H1 (cell line): ENCODE measurements at regions of chr20 and their contacts with region 1.

Region 1: DNA sequence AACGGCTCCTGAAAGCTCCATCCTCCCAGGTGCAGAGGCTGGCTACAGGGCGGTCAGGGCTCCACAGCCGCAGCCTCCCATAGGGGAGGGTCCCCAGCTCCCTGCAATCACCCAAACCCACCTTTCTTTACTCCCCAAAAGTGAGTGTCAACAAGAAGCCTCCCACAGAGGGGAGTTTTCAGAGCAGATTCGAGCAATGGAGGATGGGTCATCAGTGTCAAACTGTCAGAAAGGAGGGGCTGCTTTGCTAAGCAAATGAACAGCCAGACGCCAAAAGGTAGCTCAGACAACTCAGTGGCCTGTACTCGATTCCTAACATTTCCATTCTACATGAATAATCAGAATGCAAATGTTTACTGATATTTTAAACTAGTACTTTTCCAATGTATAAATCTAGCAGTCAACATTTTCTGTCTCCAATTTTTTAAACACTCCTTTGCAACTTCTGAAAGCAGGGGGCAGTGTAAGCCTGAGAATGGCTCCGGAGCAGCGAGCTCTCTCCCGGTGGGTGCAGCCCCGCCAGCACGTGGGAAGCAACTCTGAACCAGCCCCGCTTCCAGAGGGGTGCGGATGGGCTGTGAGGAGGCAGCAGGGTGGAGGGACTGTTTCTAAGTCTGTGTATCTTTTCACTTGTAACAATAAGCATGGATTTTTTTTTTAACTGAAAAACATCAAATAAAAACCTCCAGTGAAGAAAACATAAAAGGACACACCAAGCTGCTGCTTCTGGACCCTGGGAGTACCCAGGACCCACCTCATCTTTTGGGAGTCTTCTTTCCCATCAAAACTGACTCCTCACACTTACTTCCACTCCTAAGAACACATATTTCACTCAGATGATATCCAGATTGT is 54.9 kb downstream of the TAF4 start:
- DNase-seq: peak; percentile 23 to 70
- H3K4me3 ChIP-seq: no peak overlapping the region
- H3K27ac ChIP-seq: no peak overlapping the region
- H3K4me1 ChIP-seq: peaks cover 0 to 2% (median 0%) of the 10 kb centered on the region in 4 experiments; a peak in 3 of 7 replicates
- H3K27me3 ChIP-seq: no peaks in the 10 kb centered on the region
- CTCF ChIP-seq: peak; percentile 43 to 77 (median 62)
- EP300 ChIP-seq: no peak
- POLR2A ChIP-seq: no peak
- RAD21 ChIP-seq: peak; percentile 92 to 93

Region 2: DNA sequence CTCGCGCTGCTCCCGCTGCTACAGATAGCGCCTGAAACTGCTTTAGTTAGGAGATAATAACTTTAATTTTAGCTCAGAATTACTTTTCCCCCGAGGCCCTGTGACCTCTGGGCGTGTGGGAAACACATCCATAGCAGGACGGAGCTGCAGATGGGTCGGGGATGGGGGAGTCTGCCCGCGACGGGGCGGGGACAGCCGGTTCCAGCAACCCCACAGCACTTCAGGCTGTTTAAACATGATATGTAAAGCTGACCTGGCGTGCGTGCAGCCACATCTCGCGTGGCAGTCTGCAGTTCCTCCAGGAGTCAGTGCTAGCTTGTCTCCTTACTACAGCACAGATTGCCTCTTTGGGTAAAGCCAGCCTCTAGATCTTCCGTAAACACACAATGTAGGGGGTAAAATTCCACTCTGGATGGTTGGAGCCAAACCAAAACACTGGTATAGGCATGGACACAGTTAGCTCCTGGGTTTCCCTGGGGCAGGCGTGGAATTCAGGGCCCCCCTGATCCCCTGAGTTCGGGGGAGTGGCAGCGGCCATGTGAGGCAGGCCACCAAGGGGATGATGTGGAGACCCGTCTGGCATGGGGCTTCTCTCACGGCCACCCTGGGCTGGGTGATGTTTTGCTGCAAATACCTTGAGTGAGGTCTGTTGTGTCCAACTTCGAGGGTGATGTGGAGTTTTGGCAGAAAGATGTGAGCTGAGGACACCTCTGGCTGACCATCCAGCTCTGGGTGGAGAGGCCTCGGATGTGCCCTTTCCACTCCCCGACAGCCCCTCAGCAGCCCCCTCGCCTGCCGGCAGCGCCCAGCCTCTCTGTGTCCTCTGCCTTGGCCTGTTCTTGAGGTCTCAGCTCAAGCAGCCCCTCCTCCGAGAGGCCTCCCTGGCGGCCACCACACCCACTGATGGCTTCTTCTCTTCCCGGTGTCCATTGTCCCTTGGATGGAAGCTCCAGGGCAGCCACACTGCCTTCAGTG is 159.6 kb before region 1 on chr20:
- CTCF ChIA-PET with region 1: no interaction called
- POLR2A ChIA-PET with region 1: no interaction called
- DNase-seq: no peak
- H3K4me3 ChIP-seq: no peak overlapping the region
- H3K27ac ChIP-seq: no peak overlapping the region
- H3K4me1 ChIP-seq: no peaks in the 10 kb centered on the region
- H3K27me3 ChIP-seq: no peaks in the 10 kb centered on the region; a peak in 1 of 7 replicates
- CTCF ChIP-seq: no peak
- EP300 ChIP-seq: no peak
- POLR2A ChIP-seq: no peak
- RAD21 ChIP-seq: no peak

Region 3: DNA sequence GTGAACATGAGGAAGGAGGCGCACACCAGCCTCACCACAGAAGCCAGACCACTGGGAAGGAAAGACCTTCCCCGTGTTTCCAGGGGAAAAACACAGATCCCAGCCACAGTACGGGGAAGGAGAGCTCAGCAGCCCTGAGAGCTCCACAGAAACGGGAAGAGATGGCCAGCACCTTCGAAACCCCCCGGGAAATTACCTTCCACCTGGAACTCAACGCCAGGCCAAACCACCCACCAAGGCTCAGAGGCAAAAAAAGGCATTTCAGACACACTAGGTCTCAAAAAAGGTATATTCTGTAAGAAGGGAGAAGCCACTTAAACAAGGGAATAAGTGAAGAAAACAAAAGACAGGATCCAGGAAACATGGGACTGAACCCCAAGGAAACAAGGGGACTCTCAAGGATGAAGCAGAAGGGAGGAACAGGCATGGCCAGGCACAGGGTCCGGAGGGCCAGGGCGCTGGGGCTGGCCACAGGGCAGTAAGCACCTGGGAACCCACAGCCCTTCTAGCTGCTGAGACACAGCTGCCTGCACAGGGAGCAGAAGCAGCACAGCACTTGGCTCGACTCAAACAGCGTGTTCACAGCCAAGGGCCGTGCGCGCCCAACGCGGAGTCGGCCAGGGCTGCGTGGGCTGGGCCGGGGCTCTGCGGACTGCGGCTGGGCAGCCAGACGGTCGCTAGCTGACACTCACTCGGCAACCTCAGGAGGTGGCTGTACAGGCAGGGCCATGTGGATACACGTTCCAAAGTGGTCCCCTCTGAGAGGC is 10.3 kb after region 1 on chr20:
- CTCF ChIA-PET with region 1: interaction called, 22 read pairs
- POLR2A ChIA-PET with region 1: interaction called, 6 read pairs
- DNase-seq: no peak
- H3K4me3 ChIP-seq: no peak overlapping the region
- H3K27ac ChIP-seq: no peak overlapping the region
- H3K4me1 ChIP-seq: peaks cover 0 to 9% (median 5%) of the 10 kb centered on the region in 4 experiments
- H3K27me3 ChIP-seq: no peaks in the 10 kb centered on the region
- CTCF ChIP-seq: no peak
- EP300 ChIP-seq: no peak
- POLR2A ChIP-seq: no peak
- RAD21 ChIP-seq: no peak

Region 4: GRCh38 chr20:62121776-62122631 is 111.2 kb after region 1 on chr20 and contains the start of gene LSM14B:
- CTCF ChIA-PET with region 1: interaction called, 41 read pairs
- POLR2A ChIA-PET with region 1: interaction called, 6 read pairs
- DNase-seq: peak; percentile 75 to 92
- H3K4me3 ChIP-seq: peak within 1 kb of the TSS; percentile 65 to 98 (median 78)
- H3K27ac ChIP-seq: peak within 1 kb of the TSS; percentile 82; the same call in 1 of the 2 replicates
- H3K4me1 ChIP-seq: peaks cover 4 to 19% (median 7%) of the 10 kb centered on the region in 4 experiments
- H3K27me3 ChIP-seq: no peaks in the 10 kb centered on the region; a peak in 1 of 7 replicates
- CTCF ChIP-seq: no peak
- EP300 ChIP-seq: peak in 1 of 2 experiments; percentile 29; a peak in 1 of 3 replicates
- POLR2A ChIP-seq: peak in 1 of 2 experiments; percentile 60; a peak in 1 of 3 replicates
- RAD21 ChIP-seq: no peak; a peak in 1 of 4 replicates
- total RNA-seq, gene LSM14B: 65.6 and 70.0 TPM in 2 replicates

Region 5: GRCh38 chr20:62136283-62137091 is 125.7 kb after region 1 on chr20:
- CTCF ChIA-PET with region 1: interaction called, 41 read pairs
- POLR2A ChIA-PET with region 1: interaction called, 8 read pairs
- DNase-seq: no peak
- H3K4me3 ChIP-seq: no peak overlapping the region
- H3K27ac ChIP-seq: no peak overlapping the region
- H3K4me1 ChIP-seq: peaks cover 0 to 1% (median 0%) of the 10 kb centered on the region in 4 experiments; a peak in 2 of 7 replicates
- H3K27me3 ChIP-seq: no peaks in the 10 kb centered on the region
- CTCF ChIP-seq: peak; percentile 76 to 90 (median 79)
- EP300 ChIP-seq: no peak
- POLR2A ChIP-seq: peak in 1 of 2 experiments; percentile 47; a peak in 1 of 3 replicates
- RAD21 ChIP-seq: peak; percentile 68 to 74

Region 6: GRCh38 chr20:62156592-62157386 is 146.0 kb after region 1 on chr20:
- CTCF ChIA-PET with region 1: interaction called, 11 read pairs
- POLR2A ChIA-PET with region 1: no interaction called
- DNase-seq: peak in 1 of 2 experiments; percentile 89
- H3K4me3 ChIP-seq: no peak overlapping the region
- H3K27ac ChIP-seq: no peak overlapping the region; the same call in 1 of the 2 replicates
- H3K4me1 ChIP-seq: peaks cover 0 to 16% (median 8%) of the 10 kb centered on the region in 4 experiments; a peak in 6 of 7 replicates
- H3K27me3 ChIP-seq: no peaks in the 10 kb centered on the region
- CTCF ChIP-seq: peak; percentile 80 to 82 (median 81)
- EP300 ChIP-seq: no peak
- POLR2A ChIP-seq: no peak
- RAD21 ChIP-seq: peak; percentile 32 to 57; a peak in 3 of 4 replicates